ENCODE measurements at regions of chrX and their contacts with region 1.

Region 1: GRCh38 chrX:70196961-70197805 is 19.9 kb downstream of the DGAT2L6 start:
- DNase-seq: peak; percentile 62
- H3K4me3 ChIP-seq: no peak overlapping the region
- H3K27ac ChIP-seq: no peak overlapping the region
- H3K4me1 ChIP-seq: no peaks in the 10 kb centered on the region
- H3K27me3 ChIP-seq: no peaks in the 10 kb centered on the region
- CTCF ChIP-seq: peak; percentile 55 to 64 (median 59)
- EP300 ChIP-seq: no peak
- POLR2A ChIP-seq: no peak

Region 2: GRCh38 chrX:70001269-70001668 is 195.9 kb before region 1 on chrX:
- in situ Hi-C with region 1: no loop called
- intact Hi-C with region 1: no loop called
- DNase-seq: no peak
- H3K4me3 ChIP-seq: no peak overlapping the region
- H3K27ac ChIP-seq: no peak overlapping the region
- H3K4me1 ChIP-seq: no peaks in the 10 kb centered on the region
- H3K27me3 ChIP-seq: no peaks in the 10 kb centered on the region
- CTCF ChIP-seq: no peak
- EP300 ChIP-seq: no peak
- POLR2A ChIP-seq: no peak

Region 3: DNA sequence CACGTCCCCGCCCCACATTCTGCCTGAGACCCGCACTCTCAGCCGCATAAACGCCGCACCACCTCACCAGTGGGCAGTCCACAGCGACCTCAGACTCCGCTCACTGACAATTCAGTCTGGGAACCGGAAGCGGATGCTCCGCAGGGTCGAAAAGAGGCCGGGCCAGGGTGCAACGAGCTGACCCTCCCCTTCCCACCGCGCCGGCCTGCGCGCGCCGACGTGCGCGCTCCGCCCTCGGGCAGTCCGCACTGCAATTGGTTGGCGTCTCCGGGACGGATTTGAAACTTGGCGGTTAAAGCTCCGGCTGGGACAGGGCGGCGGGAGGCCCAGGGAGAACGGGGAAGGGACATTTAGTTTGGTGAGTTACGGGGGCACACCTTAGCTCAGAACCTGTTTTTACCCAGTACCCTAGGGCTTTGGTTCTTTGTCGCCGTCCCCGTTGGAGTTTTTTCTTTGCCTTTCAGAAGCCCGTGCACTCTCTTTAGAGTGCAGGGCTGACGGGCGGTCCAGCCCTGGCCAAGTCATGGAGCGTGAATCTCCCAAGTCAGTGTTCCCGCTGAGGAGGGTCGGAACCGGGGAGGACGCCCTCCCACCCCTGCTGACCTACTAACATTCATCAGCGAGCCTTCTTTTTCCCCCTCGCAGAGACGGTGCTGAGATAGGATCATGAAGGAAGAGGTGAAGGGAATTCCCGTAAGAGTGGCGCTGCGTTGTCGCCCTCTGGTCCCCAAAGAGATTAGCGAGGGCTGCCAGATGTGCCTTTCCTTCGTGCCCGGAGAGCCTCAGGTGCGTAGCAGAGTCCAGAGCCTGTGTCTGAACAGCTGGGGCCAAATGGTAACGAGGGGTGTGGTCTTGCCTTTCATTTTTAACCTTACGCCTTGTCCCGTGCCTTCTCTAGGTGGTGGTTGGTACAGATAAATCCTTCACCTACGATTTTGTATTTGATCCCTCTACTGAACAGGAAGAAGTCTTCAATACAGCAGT is 92.9 kb after region 1 on chrX and contains the starts of genes KIF4A and PDZD11:
- in situ Hi-C with region 1: loop called in 1 of 4 experiments (anchors 25 kb)
- intact Hi-C with region 1: no loop called
- DNase-seq: peak; percentile 86
- H3K4me3 ChIP-seq: peak within 1 kb of the TSS; percentile 14 to 67 (median 49)
- H3K27ac ChIP-seq: peak within 1 kb of the TSS; percentile 47 to 85 (median 77)
- H3K4me1 ChIP-seq: peaks cover 0 to 13% (median 0%) of the 10 kb centered on the region in 4 donors
- H3K27me3 ChIP-seq: no peaks in the 10 kb centered on the region
- CTCF ChIP-seq: no peak
- EP300 ChIP-seq: no peak
- POLR2A ChIP-seq: peak; percentile 41
- total RNA-seq, gene KIF4A: 1.3 to 4.4 (median 1.4) TPM in 3 of 4 donors, not detected in the other
- total RNA-seq, gene PDZD11: 7.8 to 45.5 (median 23.1) TPM

Measured in transverse colon (tissue), 4 donors.